PC-3 (cell line): ENCODE measurements at regions of chr2 and their contacts with region 1.

Region 1: DNA sequence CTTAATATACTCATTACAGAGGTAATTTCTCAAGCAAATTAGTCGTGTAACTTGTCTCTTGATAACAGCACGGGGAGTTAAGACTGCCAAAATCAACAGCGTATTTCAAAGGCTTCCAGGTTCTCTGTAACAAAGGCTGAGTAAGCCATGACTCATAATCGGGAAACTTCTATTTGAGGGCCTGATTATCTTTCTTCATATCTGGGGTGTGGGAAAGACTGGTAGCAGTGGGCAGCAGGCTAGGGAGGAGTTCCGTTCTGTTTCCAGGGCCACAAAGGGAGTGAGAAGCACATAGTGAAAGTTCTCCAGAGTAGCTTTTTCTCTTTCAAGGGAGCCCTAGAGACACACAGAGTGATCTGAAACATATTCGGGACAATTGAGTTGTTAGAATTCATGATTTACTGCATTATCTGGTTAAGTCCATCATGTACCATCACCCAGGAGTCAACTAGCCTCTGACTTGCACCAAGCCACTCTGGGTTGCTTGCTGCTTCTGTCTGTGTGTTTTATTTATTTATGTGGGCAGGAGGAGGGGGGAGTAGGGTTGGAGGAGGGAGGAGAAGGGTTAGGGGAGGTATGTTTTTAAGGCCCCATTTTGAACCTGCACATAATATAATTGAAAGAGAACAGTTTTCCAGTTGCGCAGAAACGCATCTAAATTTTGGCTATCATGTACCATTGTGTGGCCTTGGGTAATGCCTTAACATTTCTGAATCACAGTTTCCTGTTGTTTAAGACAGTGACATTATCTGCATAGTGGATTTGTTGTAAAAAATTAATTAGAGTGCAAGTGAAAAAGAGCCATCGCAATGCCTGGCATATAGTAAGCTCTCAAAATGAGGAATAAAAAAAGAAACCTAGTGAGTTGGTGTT is 80.5 kb upstream of the ITPRID2 start:
- DNase-seq: peak; percentile 97
- ATAC-seq: peak; percentile 95
- H3K4me3 ChIP-seq: 0 out of 2 replicates have a peak overlapping the region, but pooled peaks have one; percentile 26
- H3K27ac ChIP-seq: peak overlapping the region; percentile 94
- H3K4me1 ChIP-seq: peaks cover 38% of the 10 kb centered on the region
- H3K27me3 ChIP-seq: no peaks in the 10 kb centered on the region
- CTCF ChIP-seq: no peak

Region 2: DNA sequence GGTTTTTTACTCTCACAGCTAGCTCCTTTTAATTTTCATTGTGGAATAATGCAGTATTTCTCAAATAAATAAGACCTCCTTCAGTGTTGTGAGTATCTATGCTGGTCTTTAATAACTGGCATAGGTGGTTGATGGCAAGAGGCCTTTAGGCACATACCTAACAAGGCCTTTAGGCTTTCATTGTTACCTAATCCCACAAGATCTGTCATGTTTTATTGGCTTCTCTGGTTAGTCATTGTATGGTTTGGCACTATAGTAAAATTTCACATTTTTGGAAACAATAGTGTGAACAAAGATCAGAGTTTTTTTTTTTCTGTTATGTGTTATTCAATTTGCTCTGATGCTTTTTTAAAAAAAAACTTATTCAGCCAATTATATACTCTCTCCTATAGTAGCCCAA is 40.9 kb before region 1 on chr2:
- CTCF ChIA-PET with region 1: interaction called, 4 read pairs
- POLR2A ChIA-PET with region 1: no interaction called
- intact Hi-C with region 1: loop called (anchors 2 kb)
- DNase-seq: peak; percentile 92
- ATAC-seq: peak; percentile 88
- H3K4me3 ChIP-seq: no peak overlapping the region
- H3K27ac ChIP-seq: peak overlapping the region; percentile 26; the same call in 1 of the 2 replicates
- H3K4me1 ChIP-seq: peaks cover 30% of the 10 kb centered on the region
- H3K27me3 ChIP-seq: no peaks in the 10 kb centered on the region
- CTCF ChIP-seq: no peak

Region 3: DNA sequence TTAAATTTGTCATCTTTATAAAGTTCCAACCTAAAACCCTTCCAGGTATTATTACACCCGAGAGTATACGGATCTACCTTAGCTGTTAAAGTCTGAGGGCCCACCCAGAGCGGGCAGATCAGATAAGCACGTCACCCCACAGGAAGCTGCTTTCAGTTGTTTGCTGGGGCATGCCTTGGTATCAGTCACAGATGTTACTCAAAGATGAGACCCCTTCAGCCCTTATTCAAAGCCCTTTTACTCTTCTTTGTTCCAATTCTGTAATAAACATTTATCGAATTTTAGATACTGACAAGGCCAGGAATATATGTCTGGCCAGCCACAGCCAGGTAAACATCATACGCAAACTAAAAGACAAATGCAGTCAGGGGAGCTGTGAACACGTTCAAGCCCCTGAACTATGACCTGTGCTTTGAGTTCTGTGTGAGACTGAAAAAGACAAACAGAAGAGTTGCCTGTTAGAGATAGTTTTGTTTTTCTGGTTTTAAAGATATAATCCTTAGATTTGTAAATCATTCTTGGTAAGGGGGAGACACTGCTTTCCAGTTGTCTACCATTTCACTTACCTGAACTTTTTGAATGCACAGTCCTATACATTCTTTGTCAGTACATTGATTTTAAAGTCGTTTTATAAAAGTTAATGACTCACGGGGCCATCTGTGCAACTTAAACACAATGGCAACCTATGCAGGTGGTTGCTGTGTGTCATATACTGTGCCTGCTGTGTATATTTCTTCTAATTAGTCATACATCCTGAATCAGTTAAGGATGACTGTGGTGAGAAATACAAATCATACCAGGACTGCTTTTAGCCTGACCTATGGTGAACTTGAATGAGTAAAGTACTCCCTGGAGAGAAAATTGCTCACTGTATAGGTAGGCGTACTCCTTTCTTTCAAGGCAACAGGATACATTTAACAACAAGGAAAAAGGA is 20.1 kb before region 1 on chr2:
- CTCF ChIA-PET with region 1: no interaction called
- POLR2A ChIA-PET with region 1: interaction called, 5 read pairs
- intact Hi-C with region 1: loop called (anchors 1 kb)
- DNase-seq: peak; percentile 95
- ATAC-seq: peak; percentile 96
- H3K4me3 ChIP-seq: 0 out of 2 replicates have a peak overlapping the region, but pooled peaks have one; percentile 2
- H3K27ac ChIP-seq: peak overlapping the region; percentile 96
- H3K4me1 ChIP-seq: peaks cover 57% of the 10 kb centered on the region
- H3K27me3 ChIP-seq: no peaks in the 10 kb centered on the region
- CTCF ChIP-seq: no peak

Region 4: GRCh38 chr2:181836583-181836982 is 25.5 kb after region 1 on chr2:
- CTCF ChIA-PET with region 1: no interaction called
- POLR2A ChIA-PET with region 1: no interaction called
- intact Hi-C with region 1: no loop called
- DNase-seq: no peak
- ATAC-seq: no peak
- H3K4me3 ChIP-seq: no peak overlapping the region
- H3K27ac ChIP-seq: no peak overlapping the region
- H3K4me1 ChIP-seq: no peaks in the 10 kb centered on the region
- H3K27me3 ChIP-seq: no peaks in the 10 kb centered on the region
- CTCF ChIP-seq: no peak